ENCODE measurements at regions of chr22 and their contacts with region 1.

Region 1: DNA sequence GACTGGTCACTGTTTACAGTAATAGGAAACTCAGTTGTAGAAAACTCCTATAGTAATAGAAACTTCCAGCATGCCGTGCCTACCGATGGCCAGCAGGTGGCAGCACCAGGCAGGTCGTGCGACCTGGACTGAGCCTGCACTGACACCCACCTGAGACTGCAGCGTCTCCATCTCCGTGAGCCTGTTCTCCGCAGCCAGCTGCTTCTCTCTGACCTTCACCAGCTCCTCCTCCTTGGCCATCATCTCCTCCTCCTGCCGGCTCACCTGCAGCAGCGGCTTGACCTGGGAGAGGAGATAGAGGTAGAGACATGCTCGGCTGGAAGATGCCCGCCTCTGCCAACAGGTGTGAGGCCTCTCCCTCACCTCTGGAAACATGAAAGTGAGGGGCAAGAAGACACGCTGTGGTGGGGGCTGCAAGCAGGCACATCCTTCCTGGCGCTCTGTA is 48.5 kb downstream of the APOL1 start:
- DNase-seq: peak; percentile 68 to 91 (median 81)
- ATAC-seq: peak; percentile 90 to 91
- H3K4me3 Mint-ChIP-seq: peak overlapping the region in 1 of 10 donors; percentile 39
- H3K27ac Mint-ChIP-seq: peak overlapping the region; percentile 34 to 93 (median 86)
- H3K4me1 Mint-ChIP-seq: peaks cover 8 to 24% (median 11%) of the 10 kb centered on the region in 4 donors
- H3K27me3 Mint-ChIP-seq: no peaks in the 10 kb centered on the region

Region 2: DNA sequence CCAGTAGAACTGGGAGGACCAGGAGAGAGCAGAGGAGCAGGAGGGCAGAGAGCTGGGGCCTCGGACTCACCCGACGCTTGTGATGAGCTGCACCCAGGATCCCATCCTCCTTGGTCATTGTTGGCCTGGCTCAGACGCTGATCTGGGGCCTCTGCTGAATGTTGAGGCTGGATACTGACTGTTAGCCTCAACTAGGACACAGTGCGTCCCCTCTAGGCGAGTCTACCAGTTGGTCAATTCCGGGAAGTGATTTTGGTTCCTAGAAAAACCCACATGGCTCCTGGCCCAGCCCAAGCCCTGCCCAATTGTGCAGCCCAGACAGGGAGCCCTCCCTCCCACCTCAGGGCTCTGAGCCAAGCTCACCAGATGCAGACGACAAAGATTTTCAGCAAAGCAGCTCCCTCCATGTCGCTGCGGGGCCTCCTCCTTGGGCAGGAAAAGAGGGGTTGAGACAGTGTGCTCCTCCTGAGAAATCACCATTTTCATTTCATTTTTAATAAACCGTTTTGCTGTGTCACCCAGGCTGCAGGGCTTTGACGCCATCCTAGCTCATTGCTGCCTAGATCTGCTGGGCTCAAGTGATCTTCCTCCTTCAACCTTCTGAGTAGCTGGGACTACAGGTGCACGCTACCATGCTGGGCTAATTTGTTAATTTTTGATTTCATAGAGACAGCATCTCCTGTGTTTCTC is 99.6 kb before region 1 on chr22 and contains the start of gene APOL4:
- POLR2A ChIA-PET with region 1: no interaction called
- DNase-seq: no peak
- ATAC-seq: no peak
- H3K4me3 Mint-ChIP-seq: no peak within 1 kb of the TSS
- H3K27ac Mint-ChIP-seq: peak within 1 kb of the TSS in 2 of 10 donors; percentile 19 to 28
- H3K4me1 Mint-ChIP-seq: peaks cover 11 to 37% (median 17%) of the 10 kb centered on the region in 4 donors
- H3K27me3 Mint-ChIP-seq: peaks cover 5 to 15% (median 9%) of the 10 kb centered on the region in 5 donors
- polyA plus RNA-seq, gene APOL4: not detected

Region 3: GRCh38 chr22:36258701-36259614 is 42.4 kb before region 1 on chr22:
- POLR2A ChIA-PET with region 1: no interaction called
- DNase-seq: no peak
- ATAC-seq: peak; percentile 50 to 54
- H3K4me3 Mint-ChIP-seq: peak overlapping the region in 9 of 10 donors; percentile 28 to 70 (median 54)
- H3K27ac Mint-ChIP-seq: peak overlapping the region; percentile 73 to 91 (median 87)
- H3K4me1 Mint-ChIP-seq: peaks cover 28 to 49% (median 46%) of the 10 kb centered on the region in 4 donors
- H3K27me3 Mint-ChIP-seq: no peaks in the 10 kb centered on the region

Region 4: GRCh38 chr22:36311386-36312358 is 10.3 kb after region 1 on chr22:
- POLR2A ChIA-PET with region 1: interaction called, 10 read pairs
- DNase-seq: no peak
- ATAC-seq: no peak
- H3K4me3 Mint-ChIP-seq: no peak overlapping the region
- H3K27ac Mint-ChIP-seq: peak overlapping the region in 3 of 10 donors; percentile 12 to 21 (median 18)
- H3K4me1 Mint-ChIP-seq: peaks cover 0 to 12% (median 1%) of the 10 kb centered on the region in 4 donors
- H3K27me3 Mint-ChIP-seq: no peaks in the 10 kb centered on the region

Region 5: GRCh38 chr22:36387752-36388518 is 86.5 kb after region 1 on chr22 and contains the start of gene MYH9:
- POLR2A ChIA-PET with region 1: interaction called, 13 read pairs
- DNase-seq: peak; percentile 96 to 99 (median 98)
- ATAC-seq: peak; percentile 71 to 81
- H3K4me3 Mint-ChIP-seq: peak within 1 kb of the TSS; percentile 87 to 98 (median 92)
- H3K27ac Mint-ChIP-seq: peak within 1 kb of the TSS; percentile 78 to 99 (median 96)
- H3K4me1 Mint-ChIP-seq: peaks cover 20 to 56% (median 38%) of the 10 kb centered on the region in 4 donors
- H3K27me3 Mint-ChIP-seq: no peaks in the 10 kb centered on the region
- polyA plus RNA-seq, gene MYH9: 51.2 to 389 (median 105) TPM

Region 6: DNA sequence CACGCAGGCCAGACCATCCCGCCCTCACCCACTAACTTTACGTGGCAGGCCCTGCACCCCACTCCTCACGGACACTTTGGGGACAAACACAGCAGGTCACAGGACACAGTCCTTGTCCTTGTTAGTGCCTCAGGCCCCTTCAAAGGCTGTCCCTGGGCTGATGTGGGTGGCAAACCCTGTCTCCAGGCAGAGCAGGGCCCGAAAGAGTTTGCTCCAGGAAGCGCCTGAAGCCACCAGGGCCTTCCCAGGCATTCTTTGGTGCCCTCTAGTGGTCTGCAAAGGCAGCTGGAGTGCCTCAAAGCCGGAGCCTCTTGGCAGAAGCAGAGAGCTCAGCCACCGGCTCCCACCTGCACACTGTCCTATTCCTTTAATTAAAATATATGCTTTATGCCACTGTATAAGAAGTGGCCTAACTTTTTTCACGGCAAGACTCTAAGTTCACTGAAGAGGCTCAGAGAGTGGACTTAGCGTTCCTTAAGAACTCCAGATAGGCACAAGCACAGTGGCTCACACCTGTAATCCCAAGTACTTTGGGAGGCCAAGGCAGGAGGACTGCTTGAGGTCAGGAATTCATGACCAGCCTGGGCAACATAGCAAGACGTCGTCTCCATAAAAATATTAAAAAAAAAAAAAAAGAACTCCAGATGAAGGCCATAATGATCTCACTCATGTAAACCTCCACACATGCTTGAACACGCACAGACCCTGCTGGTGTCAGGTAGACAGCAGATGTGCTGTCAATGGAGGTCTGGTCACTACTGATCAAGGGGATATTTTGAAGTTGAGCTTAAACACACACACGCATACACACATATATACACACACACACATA is 169.0 kb after region 1 on chr22:
- POLR2A ChIA-PET with region 1: interaction called, 28 read pairs
- DNase-seq: peak; percentile 59 to 92 (median 84)
- ATAC-seq: peak; percentile 98
- H3K4me3 Mint-ChIP-seq: no peak overlapping the region
- H3K27ac Mint-ChIP-seq: peak overlapping the region; percentile 29 to 91 (median 84)
- H3K4me1 Mint-ChIP-seq: peaks cover 8 to 39% (median 25%) of the 10 kb centered on the region in 4 donors
- H3K27me3 Mint-ChIP-seq: no peaks in the 10 kb centered on the region